ENCODE measurements at regions of chr14 and their contacts with region 1.

Region 1: GRCh38 chr14:23057757-23058653 is 685 bp upstream of the CDH24 start:
- DNase-seq: peak; percentile 89
- H3K4me3 Mint-ChIP-seq: peak overlapping the region; percentile 78
- H3K27ac Mint-ChIP-seq: peak overlapping the region; percentile 68
- H3K4me1 Mint-ChIP-seq: peaks cover 20% of the 10 kb centered on the region
- H3K27me3 Mint-ChIP-seq: peaks cover 8% of the 10 kb centered on the region

Region 2: DNA sequence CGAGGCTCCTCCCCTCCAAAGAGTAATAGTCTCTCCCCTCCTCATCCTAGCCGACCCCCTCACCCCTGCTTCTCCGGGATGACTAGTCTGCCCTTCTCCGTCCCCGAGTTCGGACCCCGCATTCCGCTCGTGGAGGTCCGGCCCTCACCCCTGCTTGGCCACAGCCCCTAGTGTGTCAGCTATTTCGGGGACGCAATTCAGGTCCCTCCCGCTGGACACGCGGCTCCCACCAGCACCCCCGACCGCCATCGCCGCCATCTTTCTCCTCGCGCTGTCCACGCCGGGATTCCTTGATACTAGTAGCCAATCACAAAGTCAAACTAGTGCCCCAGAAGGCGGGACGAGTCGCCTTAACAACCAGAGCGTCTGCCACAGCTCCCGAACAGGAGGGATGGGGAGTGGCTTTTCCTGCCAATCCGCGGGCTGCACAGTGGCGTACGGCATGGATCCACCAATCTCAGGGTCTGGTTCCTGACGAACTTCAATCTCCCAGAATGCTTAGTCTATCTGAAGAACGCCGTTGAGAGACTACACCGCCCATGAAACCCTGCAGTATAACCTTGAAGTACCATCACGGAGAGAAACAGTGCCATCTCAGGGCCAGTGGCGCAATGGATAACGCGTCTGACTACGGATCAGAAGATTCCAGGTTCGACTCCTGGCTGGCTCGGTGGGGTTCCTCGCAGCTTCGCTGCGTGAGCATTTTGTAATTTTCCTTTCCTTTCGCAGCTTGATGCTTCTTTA is 128.7 kb before region 1 on chr14 and contains the start of gene PRMT5:
- CTCF ChIA-PET with region 1: interaction called, 11 read pairs
- POLR2A ChIA-PET with region 1: no interaction called
- DNase-seq: peak; percentile 99
- H3K4me3 Mint-ChIP-seq: no peak within 1 kb of the TSS
- H3K27ac Mint-ChIP-seq: no peak within 1 kb of the TSS
- H3K4me1 Mint-ChIP-seq: peaks cover 27% of the 10 kb centered on the region
- H3K27me3 Mint-ChIP-seq: no peaks in the 10 kb centered on the region
- total RNA-seq, gene PRMT5: 52.6 to 56.8 TPM

Region 3: DNA sequence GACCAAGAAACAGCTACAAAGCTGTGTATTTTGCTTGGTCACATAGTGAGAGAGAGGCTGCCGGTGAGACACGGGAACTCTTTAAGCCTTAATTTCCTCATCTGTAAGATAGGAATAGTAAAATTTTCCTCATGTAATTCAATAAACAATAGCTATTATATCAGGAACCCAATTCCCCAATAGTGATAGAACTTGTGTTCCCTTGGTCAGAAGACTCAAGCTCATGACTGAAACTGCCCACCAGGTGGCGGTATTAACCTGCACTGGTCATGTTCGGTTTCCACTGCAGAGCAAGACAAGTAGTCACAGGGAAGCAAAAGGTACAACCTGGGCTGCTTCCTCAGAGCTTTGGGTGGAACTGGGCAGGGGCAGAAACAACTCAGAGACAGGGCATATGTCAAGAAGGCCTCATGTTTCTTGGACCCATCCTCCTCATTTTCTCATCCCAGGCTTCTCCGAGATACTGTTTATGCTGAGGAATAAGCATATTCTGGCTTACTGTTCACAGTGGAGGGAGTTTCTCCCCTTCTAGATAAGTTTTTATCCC is 71.4 kb before region 1 on chr14:
- CTCF ChIA-PET with region 1: interaction called, 64 read pairs
- POLR2A ChIA-PET with region 1: interaction called, 6 read pairs
- DNase-seq: peak; percentile 94
- H3K4me3 Mint-ChIP-seq: no peak overlapping the region
- H3K27ac Mint-ChIP-seq: no peak overlapping the region
- H3K4me1 Mint-ChIP-seq: no peaks in the 10 kb centered on the region
- H3K27me3 Mint-ChIP-seq: no peaks in the 10 kb centered on the region

Region 4: DNA sequence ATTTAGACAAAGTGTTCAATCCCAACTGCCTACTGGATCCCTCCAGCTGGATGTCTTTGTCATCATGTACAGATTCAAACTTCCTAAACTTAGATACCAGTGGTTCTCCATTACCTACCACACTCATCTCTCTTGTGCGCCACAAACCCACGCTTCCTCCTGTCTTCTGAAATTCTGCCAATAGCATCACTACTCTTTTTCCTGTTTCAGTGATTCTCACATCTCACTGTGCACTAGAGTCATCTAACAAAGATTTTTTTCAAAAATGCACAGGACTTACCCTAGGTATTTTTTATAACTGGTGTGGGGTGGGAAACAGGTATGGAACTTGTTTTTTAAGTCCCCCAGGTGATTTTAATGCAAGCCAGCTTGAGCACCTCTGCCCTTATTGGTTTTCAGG is 29.2 kb before region 1 on chr14:
- CTCF ChIA-PET with region 1: interaction called, 20 read pairs
- POLR2A ChIA-PET with region 1: no interaction called
- DNase-seq: no peak
- H3K4me3 Mint-ChIP-seq: no peak overlapping the region
- H3K27ac Mint-ChIP-seq: peak overlapping the region; percentile 73
- H3K4me1 Mint-ChIP-seq: peaks cover 54% of the 10 kb centered on the region
- H3K27me3 Mint-ChIP-seq: no peaks in the 10 kb centered on the region

Region 5: GRCh38 chr14:23041729-23042128 is 16.3 kb before region 1 on chr14:
- CTCF ChIA-PET with region 1: interaction called, 13 read pairs
- POLR2A ChIA-PET with region 1: no interaction called
- DNase-seq: no peak
- H3K4me3 Mint-ChIP-seq: no peak overlapping the region
- H3K27ac Mint-ChIP-seq: no peak overlapping the region
- H3K4me1 Mint-ChIP-seq: peaks cover under 1% of the 10 kb centered on the region
- H3K27me3 Mint-ChIP-seq: no peaks in the 10 kb centered on the region

Region 6: DNA sequence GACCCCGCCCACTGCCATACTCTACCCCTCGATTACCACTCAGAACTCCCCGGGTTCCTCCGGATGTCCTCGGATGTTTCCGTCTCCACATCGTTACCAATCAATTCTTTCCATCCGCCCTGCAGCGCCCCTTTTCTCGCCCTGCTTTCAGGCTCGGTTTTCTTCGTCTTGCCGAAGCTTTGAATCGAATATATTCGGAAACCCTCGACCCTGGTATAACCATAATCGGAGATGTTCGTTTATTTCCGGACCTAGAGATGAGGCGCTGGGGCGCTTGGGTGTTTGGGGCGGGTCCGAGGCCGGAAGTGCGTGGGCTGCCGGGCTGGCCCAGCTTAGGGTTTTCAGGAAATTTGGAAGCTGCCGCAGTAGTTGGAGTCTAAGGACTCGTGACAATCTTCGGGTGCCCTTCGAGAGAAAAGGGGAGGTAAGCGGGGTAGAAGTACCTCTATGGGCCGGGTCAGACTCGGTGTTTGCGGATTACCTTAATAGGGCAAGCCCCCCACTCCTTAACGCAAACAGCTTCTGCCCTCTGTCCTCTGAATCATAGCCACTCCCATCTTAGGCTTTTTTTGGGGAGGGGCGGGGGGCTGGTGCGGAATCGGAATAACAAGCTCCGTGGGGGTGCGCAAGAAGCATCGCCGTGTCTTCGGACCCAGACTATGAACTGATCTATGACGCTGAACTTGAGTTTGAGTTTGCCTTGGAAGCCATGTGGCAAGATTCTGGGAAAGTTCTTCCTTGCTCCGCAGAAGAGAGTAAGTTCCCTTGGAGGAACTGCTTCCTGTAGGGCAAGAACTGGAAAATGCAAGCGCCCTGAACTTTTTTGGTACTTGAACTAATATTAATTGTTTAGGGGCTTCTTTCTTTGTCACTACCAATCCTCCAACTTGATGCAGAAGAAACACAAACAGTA is 37.4 kb after region 1 on chr14 and contains the start of gene C14orf119:
- CTCF ChIA-PET with region 1: interaction called, 11 read pairs
- POLR2A ChIA-PET with region 1: no interaction called
- DNase-seq: peak; percentile 100
- H3K4me3 Mint-ChIP-seq: no peak within 1 kb of the TSS
- H3K27ac Mint-ChIP-seq: no peak within 1 kb of the TSS
- H3K4me1 Mint-ChIP-seq: peaks cover 34% of the 10 kb centered on the region
- H3K27me3 Mint-ChIP-seq: no peaks in the 10 kb centered on the region
- total RNA-seq, gene C14orf119: 48.0 to 48.2 TPM

Region 7: DNA sequence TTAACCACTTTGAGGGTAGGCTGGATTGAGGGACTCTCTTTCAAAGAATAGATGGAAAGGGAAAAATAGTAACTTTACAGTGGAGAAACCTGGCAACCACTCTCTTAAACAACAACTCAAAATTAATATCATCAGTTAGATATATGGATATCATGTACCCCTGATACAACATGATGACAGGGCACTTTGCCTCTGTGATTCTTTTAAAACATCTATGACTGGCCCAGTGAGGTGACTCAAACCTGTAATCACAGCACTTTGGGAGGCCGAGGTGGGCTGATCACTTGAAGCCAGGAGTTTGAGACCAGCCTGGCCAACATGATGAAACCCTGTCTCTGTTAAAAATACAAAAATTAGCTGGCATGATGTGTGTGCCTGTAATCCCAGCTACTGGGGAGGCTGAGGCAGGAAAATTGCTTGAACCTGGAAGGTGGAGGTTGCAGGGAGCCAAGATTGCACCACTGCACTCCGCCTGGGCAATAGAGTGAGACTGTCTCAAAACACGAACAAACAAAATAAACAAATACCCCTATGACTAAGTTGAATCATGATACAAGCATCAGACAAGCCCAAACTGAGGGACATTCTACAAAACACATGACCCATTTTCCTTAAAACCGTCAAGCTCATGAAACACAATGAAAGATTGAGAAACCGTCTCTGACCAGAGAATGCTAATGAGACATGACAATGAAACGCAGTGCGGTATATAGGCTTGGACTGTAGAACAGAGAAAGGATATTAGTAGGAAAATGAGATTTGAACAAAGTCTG is 151.8 kb after region 1 on chr14:
- CTCF ChIA-PET with region 1: no interaction called
- POLR2A ChIA-PET with region 1: no interaction called
- DNase-seq: no peak
- H3K4me3 Mint-ChIP-seq: no peak overlapping the region
- H3K27ac Mint-ChIP-seq: no peak overlapping the region
- H3K4me1 Mint-ChIP-seq: no peaks in the 10 kb centered on the region
- H3K27me3 Mint-ChIP-seq: peaks cover 22% of the 10 kb centered on the region